Activated B cell treated with CpG ODN at 0.5 μM for 24 hours (primary cell): ENCODE measurements at regions of chr6 and their contacts with region 1.

Region 1: DNA sequence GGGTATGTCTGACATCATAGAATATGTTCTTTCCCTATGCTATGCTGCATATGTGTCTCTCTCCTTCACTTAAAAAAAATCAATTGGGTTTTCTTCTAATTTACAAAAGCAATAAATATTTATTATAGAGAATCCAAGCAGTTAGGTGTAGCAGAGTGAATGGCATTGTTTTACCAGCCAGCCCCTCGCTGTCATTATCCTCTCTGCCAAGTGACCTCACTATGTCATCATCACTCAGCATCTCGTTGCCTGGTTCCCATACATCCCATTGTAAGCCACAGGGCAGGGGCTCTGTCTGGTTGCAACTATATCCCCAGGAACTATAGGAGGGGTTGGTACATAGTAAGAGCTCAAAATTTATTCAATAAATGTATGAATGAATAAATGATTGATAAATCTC is 31.3 kb downstream of the KIAA0319 start:
- DNase-seq: no peak
- ATAC-seq: no peak
- H3K4me3 Mint-ChIP-seq: no peak overlapping the region
- H3K27ac Mint-ChIP-seq: no peak overlapping the region
- H3K4me1 Mint-ChIP-seq: no peaks in the 10 kb centered on the region
- H3K27me3 Mint-ChIP-seq: peaks cover 7% of the 10 kb centered on the region
- CTCF ChIP-seq: no peak

Region 2: GRCh38 chr6:25781134-25781533 is 1166.5 kb after region 1 on chr6:
- CTCF ChIA-PET with region 1: no interaction called
- POLR2A ChIA-PET with region 1: no interaction called
- intact Hi-C with region 1: loop called (anchors 5 kb)
- DNase-seq: no peak
- ATAC-seq: no peak
- H3K4me3 Mint-ChIP-seq: no peak overlapping the region
- H3K27ac Mint-ChIP-seq: no peak overlapping the region
- H3K4me1 Mint-ChIP-seq: no peaks in the 10 kb centered on the region
- H3K27me3 Mint-ChIP-seq: peaks cover 23% of the 10 kb centered on the region
- CTCF ChIP-seq: no peak

Region 3: DNA sequence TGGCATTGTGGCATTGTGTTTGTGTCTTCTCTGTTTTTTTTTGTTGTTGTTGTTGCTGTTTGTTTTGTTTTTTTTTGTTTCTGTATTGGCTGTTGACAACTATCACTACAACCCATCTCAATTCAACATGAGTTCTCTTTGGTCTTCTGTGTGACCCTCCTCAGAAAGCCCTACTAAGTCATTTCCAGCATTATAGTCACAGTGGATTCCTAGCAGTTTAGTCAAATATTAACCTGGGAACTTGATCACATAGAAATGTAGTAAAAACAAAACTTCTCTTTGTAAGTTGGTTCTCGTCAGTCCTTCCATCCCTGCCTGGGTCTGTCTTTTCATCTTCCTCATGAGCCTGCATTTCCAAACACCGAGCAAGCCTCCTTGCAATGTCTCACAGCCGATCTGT is 1299.1 kb after region 1 on chr6:
- CTCF ChIA-PET with region 1: no interaction called
- POLR2A ChIA-PET with region 1: no interaction called
- intact Hi-C with region 1: no loop called
- DNase-seq: no peak
- ATAC-seq: no peak
- H3K4me3 Mint-ChIP-seq: no peak overlapping the region
- H3K27ac Mint-ChIP-seq: no peak overlapping the region
- H3K4me1 Mint-ChIP-seq: peaks cover 4% of the 10 kb centered on the region
- H3K27me3 Mint-ChIP-seq: peaks cover 5% of the 10 kb centered on the region
- CTCF ChIP-seq: no peak

Region 4: GRCh38 chr6:26103770-26104456 is 1489.3 kb after region 1 on chr6:
- CTCF ChIA-PET with region 1: no interaction called
- POLR2A ChIA-PET with region 1: no interaction called
- intact Hi-C with region 1: no loop called
- DNase-seq: peak; percentile 83
- ATAC-seq: peak; percentile 85
- H3K4me3 Mint-ChIP-seq: peak overlapping the region; percentile 85
- H3K27ac Mint-ChIP-seq: peak overlapping the region; percentile 98
- H3K4me1 Mint-ChIP-seq: peaks cover 12% of the 10 kb centered on the region
- H3K27me3 Mint-ChIP-seq: peaks cover 3% of the 10 kb centered on the region
- CTCF ChIP-seq: no peak